SK-N-SH (cell line): ENCODE measurements at regions of chr14 and their contacts with region 1.

Region 1: DNA sequence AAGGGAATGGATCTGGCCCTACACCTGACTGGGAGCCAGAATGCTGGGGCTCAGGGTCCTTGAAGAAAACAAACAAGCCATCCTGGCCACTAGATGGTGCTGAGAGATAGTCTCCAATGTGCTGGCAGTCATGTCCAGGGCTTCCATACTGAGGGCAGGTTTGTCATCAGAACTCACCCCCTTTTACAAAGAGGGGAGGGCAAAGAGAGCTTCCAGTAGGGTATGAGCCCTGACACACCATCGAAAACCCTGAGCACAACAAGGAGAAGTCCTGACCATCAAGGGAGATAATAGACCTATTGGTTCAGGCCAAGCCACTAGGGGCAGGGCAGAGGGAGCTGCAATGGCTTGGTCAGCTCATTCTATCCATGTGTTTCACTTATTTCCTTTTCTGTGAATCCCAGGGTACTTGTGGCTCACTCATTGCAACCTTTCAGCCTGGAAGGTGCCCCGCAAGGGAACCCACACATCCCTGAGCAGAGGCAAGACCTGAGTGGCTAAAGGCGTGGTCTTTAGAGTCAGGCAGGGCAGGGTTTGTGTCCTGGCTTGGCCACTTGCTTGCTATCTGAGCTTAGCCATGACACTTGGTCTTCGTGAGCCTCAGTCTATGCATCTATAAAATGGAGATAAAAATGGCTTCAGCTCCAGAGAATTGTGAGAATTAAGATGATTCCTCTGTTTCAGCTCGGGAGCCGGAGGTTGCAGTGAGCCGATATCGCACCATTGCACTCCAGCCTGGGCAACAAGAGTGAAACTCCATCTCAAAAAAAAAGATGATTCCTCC is 6.2 kb upstream of the PLEKHH1 start:
- DNase-seq: peak; percentile 65
- H3K4me3 ChIP-seq: peak overlapping the region in 1 of 2 experiments; percentile 34; a peak in 1 of 4 replicates
- H3K27ac ChIP-seq: no peak overlapping the region
- H3K4me1 ChIP-seq: no peaks in the 10 kb centered on the region; a peak in 1 of 4 replicates
- H3K27me3 ChIP-seq: peaks cover 18% of the 10 kb centered on the region; the same call in 1 of the 2 replicates
- CTCF ChIP-seq: peak; percentile 86
- EP300 ChIP-seq: no peak
- RAD21 ChIP-seq: peak; percentile 72

Region 2: GRCh38 chr14:67335781-67336180 is 191.1 kb before region 1 on chr14:
- CTCF ChIA-PET with region 1: no interaction called
- POLR2A ChIA-PET with region 1: no interaction called
- DNase-seq: peak; percentile 27
- H3K4me3 ChIP-seq: no peak overlapping the region
- H3K27ac ChIP-seq: no peak overlapping the region
- H3K4me1 ChIP-seq: no peaks in the 10 kb centered on the region; a peak in 1 of 4 replicates
- H3K27me3 ChIP-seq: no peaks in the 10 kb centered on the region
- CTCF ChIP-seq: peak; percentile 60
- EP300 ChIP-seq: no peak
- RAD21 ChIP-seq: peak; percentile 48

Region 3: GRCh38 chr14:67491741-67492505 is 34.9 kb before region 1 on chr14:
- CTCF ChIA-PET with region 1: interaction called, 18 read pairs
- POLR2A ChIA-PET with region 1: interaction called, 3 read pairs
- DNase-seq: peak; percentile 73
- H3K4me3 ChIP-seq: no peak overlapping the region
- H3K27ac ChIP-seq: peak overlapping the region in 1 of 2 experiments; percentile 39; a peak in 2 of 4 replicates
- H3K4me1 ChIP-seq: peaks cover 0 to 17% of the 10 kb centered on the region in 2 experiments; a peak in 1 of 4 replicates
- H3K27me3 ChIP-seq: no peaks in the 10 kb centered on the region; the same call in 1 of the 2 replicates
- CTCF ChIP-seq: no peak
- EP300 ChIP-seq: 0 out of 4 replicates have a peak, but pooled peaks of 1 of the 2 experiments have one; percentile 12
- RAD21 ChIP-seq: no peak

Region 4: DNA sequence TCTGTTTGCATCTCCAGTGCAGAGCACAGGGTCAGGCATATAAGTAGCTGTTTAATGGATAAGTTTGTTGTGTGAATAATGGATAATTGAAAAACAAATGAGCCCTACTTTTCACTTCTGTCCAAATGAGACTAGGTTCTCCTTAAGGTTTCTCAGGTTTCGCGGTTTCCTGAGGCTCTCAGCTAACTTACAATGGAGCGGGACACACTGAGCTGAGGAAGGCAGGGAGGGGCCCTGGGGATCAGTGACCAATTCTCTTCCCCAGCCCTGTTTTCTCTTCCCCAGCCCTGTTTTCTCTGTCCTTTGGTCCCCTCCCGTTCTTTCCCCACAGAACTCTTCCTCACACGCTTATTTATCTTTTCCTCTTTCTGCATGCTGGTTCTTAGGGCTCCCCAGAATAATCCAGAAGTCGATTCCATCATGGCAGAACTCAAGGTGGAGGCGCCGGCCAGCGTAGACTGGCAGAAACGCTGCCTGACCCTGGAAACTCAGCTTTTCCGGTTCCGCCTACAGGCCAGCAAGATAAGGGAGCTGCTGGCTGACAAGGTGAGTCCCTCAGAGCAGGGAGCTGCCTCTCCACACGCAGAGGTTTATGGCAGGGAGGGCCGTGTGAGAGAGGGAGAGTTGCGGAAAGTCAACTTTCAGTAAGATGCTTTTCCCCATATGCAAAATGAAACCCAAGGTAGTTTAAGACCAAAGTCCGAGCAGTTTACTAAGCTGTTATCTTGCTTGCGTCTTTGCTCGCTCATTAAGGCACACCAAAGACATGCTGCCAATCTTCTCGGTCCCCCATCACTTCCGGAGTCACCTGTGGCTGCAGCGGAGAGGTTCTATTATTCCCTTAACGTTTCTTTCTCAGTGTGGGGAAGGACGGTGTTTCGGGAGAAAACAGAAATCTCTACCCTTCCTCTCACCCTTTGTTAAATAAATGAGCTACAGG is 14.8 kb after region 1 on chr14:
- CTCF ChIA-PET with region 1: interaction called, 22 read pairs
- POLR2A ChIA-PET with region 1: no interaction called
- DNase-seq: no peak
- H3K4me3 ChIP-seq: no peak overlapping the region
- H3K27ac ChIP-seq: no peak overlapping the region
- H3K4me1 ChIP-seq: no peaks in the 10 kb centered on the region
- H3K27me3 ChIP-seq: 0 out of 2 replicates have a peak, but pooled peaks cover 4% of the 10 kb centered on the region
- CTCF ChIP-seq: no peak
- EP300 ChIP-seq: no peak
- RAD21 ChIP-seq: no peak

Region 5: DNA sequence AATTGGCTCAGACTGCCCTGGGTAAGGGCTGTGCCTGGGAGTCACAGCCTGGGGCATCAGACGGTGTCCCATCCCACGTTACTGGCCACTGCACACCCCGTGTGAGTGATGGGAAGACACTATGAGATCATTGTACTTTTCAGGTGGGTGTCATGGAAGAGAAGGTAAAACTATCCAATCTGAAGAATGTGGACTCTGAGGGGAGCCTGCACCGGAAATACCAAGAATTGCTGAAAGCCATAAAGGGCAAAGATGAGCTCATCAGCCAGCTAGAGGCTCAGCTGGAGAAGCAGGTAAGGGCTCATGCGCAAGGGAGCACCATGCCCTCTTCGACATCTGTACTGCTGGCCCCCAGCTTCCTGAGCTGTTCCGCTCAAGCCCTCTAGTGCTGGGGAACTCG is 30.3 kb after region 1 on chr14:
- CTCF ChIA-PET with region 1: interaction called, 237 read pairs
- POLR2A ChIA-PET with region 1: no interaction called
- DNase-seq: no peak
- H3K4me3 ChIP-seq: no peak overlapping the region
- H3K27ac ChIP-seq: no peak overlapping the region
- H3K4me1 ChIP-seq: no peaks in the 10 kb centered on the region
- H3K27me3 ChIP-seq: no peaks in the 10 kb centered on the region
- CTCF ChIP-seq: no peak
- EP300 ChIP-seq: no peak
- RAD21 ChIP-seq: no peak

Region 6: DNA sequence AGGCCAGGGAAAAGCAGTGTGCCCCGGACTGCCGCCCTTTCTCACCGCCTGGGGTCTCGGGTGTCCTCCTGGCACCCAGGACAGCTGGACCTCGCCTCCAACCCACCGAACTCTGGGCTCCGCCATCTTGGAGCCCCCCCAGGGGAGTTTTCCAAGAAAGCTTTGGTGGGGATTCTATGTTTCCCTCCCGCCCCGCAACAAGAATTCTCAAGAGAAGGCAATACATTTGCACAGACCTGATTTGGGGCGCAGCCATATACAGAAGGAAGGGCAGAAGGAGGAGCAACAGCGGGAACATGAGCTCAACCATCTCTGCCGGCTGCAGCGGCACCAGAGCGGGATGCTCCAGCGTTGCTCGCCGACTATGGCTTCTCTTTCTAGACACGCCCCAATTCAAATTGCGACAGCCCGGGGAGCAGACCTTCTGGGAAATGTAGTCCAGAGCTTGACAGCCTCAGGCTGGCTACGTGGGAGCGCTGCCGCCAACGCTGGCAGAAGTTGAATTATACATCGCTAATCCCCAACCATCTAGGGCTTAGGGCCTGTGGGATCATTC is 168.6 kb after region 1 on chr14 and contains the start of gene RDH11:
- CTCF ChIA-PET with region 1: interaction called, 13 read pairs
- POLR2A ChIA-PET with region 1: no interaction called
- DNase-seq: peak; percentile 85
- H3K4me3 ChIP-seq: peak within 1 kb of the TSS; percentile 98 to 100
- H3K27ac ChIP-seq: peak within 1 kb of the TSS; percentile 87 to 90
- H3K4me1 ChIP-seq: peaks cover 6 to 12% of the 10 kb centered on the region in 2 experiments; a peak in 2 of 4 replicates
- H3K27me3 ChIP-seq: no peaks in the 10 kb centered on the region
- CTCF ChIP-seq: no peak
- EP300 ChIP-seq: no peak
- RAD21 ChIP-seq: no peak
- polyA plus RNA-seq, gene RDH11: 44.7 and 65.8 TPM in 2 replicates